ENCODE measurements at regions of chr7 and their contacts with region 1.

Region 1: DNA sequence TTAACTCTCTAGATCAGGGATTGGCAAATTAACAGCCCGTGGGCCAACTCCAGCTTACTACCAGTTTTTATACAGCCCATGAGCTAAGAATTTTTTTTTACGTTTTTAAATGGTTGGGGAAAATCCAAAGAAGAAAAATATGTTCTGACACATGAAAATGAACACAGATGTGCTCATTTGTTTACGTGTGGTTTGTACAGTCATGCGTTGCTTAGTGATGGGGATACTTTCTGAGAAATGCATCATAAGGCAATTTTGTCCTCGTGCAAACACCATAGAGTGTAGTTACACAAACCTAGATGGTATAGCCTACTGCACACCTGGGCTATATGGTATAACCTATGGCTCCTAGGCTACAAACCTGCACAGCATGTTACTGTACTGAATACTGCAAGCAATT is 8.3 kb upstream of the SMKR1 start:
- DNase-seq: no peak
- ATAC-seq: no peak
- H3K4me3 ChIP-seq: no peak overlapping the region
- H3K27ac ChIP-seq: no peak overlapping the region
- H3K4me1 ChIP-seq: no peaks in the 10 kb centered on the region
- H3K27me3 ChIP-seq: no peaks in the 10 kb centered on the region
- CTCF ChIP-seq: no peak
- POLR2A ChIP-seq: no peak

Region 2: GRCh38 chr7:129626896-129627295 is 132.9 kb after region 1 on chr7:
- in situ Hi-C with region 1: loop called in 1 of 4 experiments (anchors 10 kb)
- intact Hi-C with region 1: no loop called
- DNase-seq: no peak
- ATAC-seq: no peak
- H3K4me3 ChIP-seq: no peak overlapping the region
- H3K27ac ChIP-seq: no peak overlapping the region
- H3K4me1 ChIP-seq: peaks cover under 1 to 4% of the 10 kb centered on the region in 2 donors
- H3K27me3 ChIP-seq: no peaks in the 10 kb centered on the region
- CTCF ChIP-seq: no peak
- POLR2A ChIP-seq: no peak